Aorta (tissue), 5 donors: ENCODE measurements at regions of chr2 and their contacts with region 1.

Region 1: GRCh38 chr2:36663851-36664695 is 32.4 kb upstream of the VIT start:
- DNase-seq: no peak
- ATAC-seq: peak; percentile 75
- H3K4me3 ChIP-seq: no peak overlapping the region
- H3K27ac ChIP-seq: no peak overlapping the region
- H3K4me1 ChIP-seq: no peaks in the 10 kb centered on the region
- H3K27me3 ChIP-seq: no peaks in the 10 kb centered on the region

Region 2: GRCh38 chr2:35871672-35872071 is 792.4 kb before region 1 on chr2:
- intact Hi-C with region 1: loop called in 1 of 2 experiments (anchors 10 kb)
- DNase-seq: no peak
- ATAC-seq: no peak
- H3K4me3 ChIP-seq: no peak overlapping the region
- H3K27ac ChIP-seq: no peak overlapping the region
- H3K4me1 ChIP-seq: no peaks in the 10 kb centered on the region
- H3K27me3 ChIP-seq: no peaks in the 10 kb centered on the region

Region 3: GRCh38 chr2:36561237-36561944 is 102.7 kb before region 1 on chr2:
- intact Hi-C with region 1: loop called in 1 of 2 experiments (anchors 5 kb)
- DNase-seq: no peak
- ATAC-seq: peak; percentile 57
- H3K4me3 ChIP-seq: no peak overlapping the region
- H3K27ac ChIP-seq: peak overlapping the region in 1 of 2 donors; percentile 96
- H3K4me1 ChIP-seq: peaks cover 0 to under 1% of the 10 kb centered on the region in 2 donors
- H3K27me3 ChIP-seq: no peaks in the 10 kb centered on the region

Region 4: GRCh38 chr2:36741188-36741837 is 77.2 kb after region 1 on chr2:
- intact Hi-C with region 1: no loop called
- DNase-seq: no peak
- ATAC-seq: no peak
- H3K4me3 ChIP-seq: no peak overlapping the region
- H3K27ac ChIP-seq: no peak overlapping the region
- H3K4me1 ChIP-seq: no peaks in the 10 kb centered on the region
- H3K27me3 ChIP-seq: no peaks in the 10 kb centered on the region